ENCODE measurements at regions of chr2 and their contacts with region 1.

Region 1: GRCh38 chr2:202870431-202871299 is 901 bp downstream of the ICA1L start:
- DNase-seq: peak; percentile 79
- ATAC-seq: peak; percentile 88
- H3K4me3 Mint-ChIP-seq: peak overlapping the region; percentile 90
- H3K27ac Mint-ChIP-seq: peak overlapping the region; percentile 82
- H3K4me1 Mint-ChIP-seq: peaks cover 12% of the 10 kb centered on the region
- H3K27me3 Mint-ChIP-seq: peaks cover 1% of the 10 kb centered on the region

Region 2: DNA sequence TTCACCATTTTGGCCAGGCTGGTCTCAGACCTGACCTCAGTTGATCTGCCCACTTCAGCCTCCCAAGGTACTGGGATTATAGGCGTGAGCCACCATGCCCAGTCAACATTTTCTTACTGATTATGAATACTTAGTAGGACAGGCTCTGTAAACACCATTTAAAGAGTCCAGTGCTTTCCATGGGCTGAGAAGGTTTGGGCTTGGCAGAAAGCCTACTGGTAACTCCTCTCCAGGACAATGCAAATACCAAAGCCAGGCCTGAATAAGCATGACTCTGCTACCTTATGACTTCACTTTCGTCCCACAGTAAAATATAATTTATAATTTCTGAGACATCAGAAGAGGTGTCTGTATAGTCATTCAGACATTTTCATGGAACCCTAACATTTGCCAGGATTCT is 296.1 kb before region 1 on chr2:
- CTCF ChIA-PET with region 1: interaction called, 12 read pairs
- POLR2A ChIA-PET with region 1: no interaction called
- DNase-seq: no peak
- ATAC-seq: no peak
- H3K4me3 Mint-ChIP-seq: no peak overlapping the region
- H3K27ac Mint-ChIP-seq: no peak overlapping the region
- H3K4me1 Mint-ChIP-seq: no peaks in the 10 kb centered on the region
- H3K27me3 Mint-ChIP-seq: no peaks in the 10 kb centered on the region

Region 3: GRCh38 chr2:202634556-202635427 is 235.9 kb before region 1 on chr2 and contains the start of gene FAM117B:
- CTCF ChIA-PET with region 1: interaction called, 10 read pairs
- POLR2A ChIA-PET with region 1: interaction called, 6 read pairs
- DNase-seq: peak; percentile 99
- ATAC-seq: peak; percentile 92
- H3K4me3 Mint-ChIP-seq: peak within 1 kb of the TSS; percentile 95
- H3K27ac Mint-ChIP-seq: peak within 1 kb of the TSS; percentile 92
- H3K4me1 Mint-ChIP-seq: peaks cover 52% of the 10 kb centered on the region
- H3K27me3 Mint-ChIP-seq: no peaks in the 10 kb centered on the region
- total RNA-seq, gene FAM117B: 17.1 to 18.8 TPM

Region 4: DNA sequence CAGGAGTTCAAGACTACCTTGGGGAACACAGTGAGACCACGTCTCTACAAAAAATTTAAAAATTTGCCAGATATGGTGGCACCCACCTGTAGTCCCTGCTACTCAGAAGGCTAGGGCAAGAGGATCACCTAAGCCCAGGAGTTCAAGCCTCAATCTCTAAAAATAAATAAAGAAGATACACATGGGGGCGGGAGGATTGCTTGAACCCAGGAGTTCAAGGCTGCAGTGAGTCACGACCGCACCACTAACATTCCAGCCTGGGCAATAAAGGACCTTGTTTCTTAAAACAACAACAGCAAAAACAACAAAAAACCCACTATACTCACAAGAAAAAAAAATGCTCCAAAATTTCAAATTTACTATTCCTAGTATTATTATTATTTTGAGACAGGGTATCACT is 10.9 kb after region 1 on chr2:
- CTCF ChIA-PET with region 1: interaction called, 11 read pairs
- POLR2A ChIA-PET with region 1: no interaction called
- DNase-seq: no peak
- ATAC-seq: no peak
- H3K4me3 Mint-ChIP-seq: no peak overlapping the region
- H3K27ac Mint-ChIP-seq: no peak overlapping the region
- H3K4me1 Mint-ChIP-seq: peaks cover 2% of the 10 kb centered on the region
- H3K27me3 Mint-ChIP-seq: no peaks in the 10 kb centered on the region

Region 5: GRCh38 chr2:202965810-202966460 is 95.3 kb after region 1 on chr2:
- CTCF ChIA-PET with region 1: no interaction called
- POLR2A ChIA-PET with region 1: no interaction called
- DNase-seq: no peak
- ATAC-seq: no peak
- H3K4me3 Mint-ChIP-seq: no peak overlapping the region
- H3K27ac Mint-ChIP-seq: no peak overlapping the region
- H3K4me1 Mint-ChIP-seq: peaks cover 4% of the 10 kb centered on the region
- H3K27me3 Mint-ChIP-seq: no peaks in the 10 kb centered on the region

Measured in activated CD8-positive, alpha-beta T cell treated with anti-CD3 and anti-CD28 coated beads, Interleukin-2, amount 10 ng/mL, durations not matched to agents 7 days and 5 days (primary cell).